Activated T-helper 2 cell treated with anti-CD3 and anti-CD28 coated beads, Interferon-gamma antibody, Interleukin-2, Interleukin-4, amounts not matched to agents 10 μg/mL and 5 μg/mL and 100 μg/mL, durations not matched to agents 14 hours and 24 hours and 36 hours (primary cell): ENCODE measurements at regions of chr3 and their contacts with region 1.

Region 1: GRCh38 chr3:120558771-120559241 is 37.3 kb upstream of the NDUFB4 start:
- DNase-seq: peak; percentile 83
- H3K4me3 Mint-ChIP-seq: peak overlapping the region; percentile 78
- H3K27ac Mint-ChIP-seq: peak overlapping the region; percentile 58
- H3K4me1 Mint-ChIP-seq: peaks cover 10% of the 10 kb centered on the region
- H3K27me3 Mint-ChIP-seq: peaks cover 9% of the 10 kb centered on the region

Region 2: GRCh38 chr3:120417272-120417911 is 141.4 kb before region 1 on chr3:
- intact Hi-C with region 1: loop called (anchors 1 kb)
- DNase-seq: peak; percentile 81
- H3K4me3 Mint-ChIP-seq: peak overlapping the region; percentile 80
- H3K27ac Mint-ChIP-seq: no peak overlapping the region
- H3K4me1 Mint-ChIP-seq: peaks cover 14% of the 10 kb centered on the region
- H3K27me3 Mint-ChIP-seq: peaks cover 21% of the 10 kb centered on the region

Region 3: GRCh38 chr3:120587332-120587975 is 28.6 kb after region 1 on chr3:
- intact Hi-C with region 1: no loop called
- DNase-seq: no peak
- H3K4me3 Mint-ChIP-seq: no peak overlapping the region
- H3K27ac Mint-ChIP-seq: no peak overlapping the region
- H3K4me1 Mint-ChIP-seq: no peaks in the 10 kb centered on the region
- H3K27me3 Mint-ChIP-seq: peaks cover 16% of the 10 kb centered on the region

Region 4: DNA sequence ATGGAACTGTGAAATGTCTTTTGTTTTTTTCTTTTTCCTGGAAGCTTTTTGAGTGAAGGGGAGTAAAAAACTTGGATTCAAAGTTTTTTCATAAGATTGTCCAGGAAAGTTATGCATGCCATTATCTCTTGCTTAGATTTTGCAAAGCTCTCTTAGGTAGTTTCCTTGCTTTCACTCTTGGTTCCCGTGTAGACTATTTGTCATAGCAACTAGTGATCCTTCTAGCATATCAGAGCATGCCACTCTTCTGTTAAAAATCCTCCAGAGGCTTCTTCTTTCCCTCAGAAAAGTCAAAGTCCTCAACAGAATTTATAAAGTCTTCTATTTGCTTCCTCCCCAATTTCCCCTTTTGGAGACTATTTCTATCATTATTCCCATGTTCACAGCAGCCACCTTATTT is 204.8 kb after region 1 on chr3:
- intact Hi-C with region 1: no loop called
- DNase-seq: no peak
- H3K4me3 Mint-ChIP-seq: no peak overlapping the region
- H3K27ac Mint-ChIP-seq: no peak overlapping the region
- H3K4me1 Mint-ChIP-seq: peaks cover 30% of the 10 kb centered on the region
- H3K27me3 Mint-ChIP-seq: no peaks in the 10 kb centered on the region

Region 5: DNA sequence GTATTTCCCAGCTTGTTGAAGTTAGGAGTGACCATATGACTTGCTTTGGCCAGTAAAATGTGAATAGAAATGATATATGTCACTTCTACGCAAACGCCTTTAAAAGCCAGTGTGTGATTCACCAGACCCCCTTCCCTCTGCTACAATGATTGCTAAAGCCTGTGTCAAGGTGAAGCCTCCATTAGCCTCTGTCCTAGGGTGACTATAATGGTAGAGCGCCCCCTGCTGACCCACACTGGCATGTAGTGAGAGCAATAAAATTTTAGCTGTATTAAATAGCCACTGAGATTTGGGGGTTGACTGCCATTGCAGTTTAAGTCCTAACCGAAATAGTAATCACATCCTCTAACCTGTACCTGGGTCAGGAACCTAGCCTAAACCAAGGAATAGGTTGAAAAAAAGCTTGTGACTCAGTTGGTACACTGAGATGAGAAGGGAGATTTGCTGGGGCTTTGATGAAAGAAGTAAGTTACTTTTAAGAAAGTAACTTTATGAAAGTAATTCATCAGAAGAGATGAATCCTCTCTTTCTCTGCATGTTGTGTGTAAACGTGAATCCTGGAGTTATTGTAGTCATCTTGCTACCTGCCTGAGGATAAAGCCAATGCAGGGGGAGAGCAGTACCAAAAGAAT is 236.3 kb after region 1 on chr3:
- intact Hi-C with region 1: loop called (anchors 1 kb)
- DNase-seq: peak; percentile 70
- H3K4me3 Mint-ChIP-seq: no peak overlapping the region
- H3K27ac Mint-ChIP-seq: no peak overlapping the region
- H3K4me1 Mint-ChIP-seq: no peaks in the 10 kb centered on the region
- H3K27me3 Mint-ChIP-seq: no peaks in the 10 kb centered on the region